ENCODE measurements at regions of chr1 and their contacts with region 1.

Region 1: DNA sequence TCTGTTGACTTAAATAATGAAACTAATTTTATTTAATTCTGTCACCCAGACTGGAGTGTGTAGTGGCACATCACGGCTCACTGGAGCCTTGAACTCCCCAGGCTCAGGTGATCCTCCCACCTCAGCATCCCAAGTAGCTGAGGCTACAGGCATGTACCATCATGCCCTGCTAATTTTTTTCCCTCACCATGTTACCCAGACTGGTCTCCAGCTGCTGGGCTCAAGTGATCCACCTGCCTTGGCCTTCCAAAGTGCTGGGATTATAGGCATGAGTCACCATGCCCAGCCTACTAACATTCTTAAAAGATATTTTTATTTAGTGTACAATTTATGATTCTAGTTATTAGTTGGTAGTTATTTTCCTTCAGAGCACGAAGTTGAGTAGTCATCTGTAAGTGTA is 49.5 kb downstream of the NRDC start:
- DNase-seq: no peak
- ATAC-seq: no peak
- H3K4me3 ChIP-seq: no peak overlapping the region
- H3K27ac ChIP-seq: no peak overlapping the region
- H3K4me1 ChIP-seq: no peaks in the 10 kb centered on the region
- H3K27me3 ChIP-seq: no peaks in the 10 kb centered on the region
- CTCF ChIP-seq: no peak
- POLR2A ChIP-seq: no peak
- RAD21 ChIP-seq: no peak

Region 2: DNA sequence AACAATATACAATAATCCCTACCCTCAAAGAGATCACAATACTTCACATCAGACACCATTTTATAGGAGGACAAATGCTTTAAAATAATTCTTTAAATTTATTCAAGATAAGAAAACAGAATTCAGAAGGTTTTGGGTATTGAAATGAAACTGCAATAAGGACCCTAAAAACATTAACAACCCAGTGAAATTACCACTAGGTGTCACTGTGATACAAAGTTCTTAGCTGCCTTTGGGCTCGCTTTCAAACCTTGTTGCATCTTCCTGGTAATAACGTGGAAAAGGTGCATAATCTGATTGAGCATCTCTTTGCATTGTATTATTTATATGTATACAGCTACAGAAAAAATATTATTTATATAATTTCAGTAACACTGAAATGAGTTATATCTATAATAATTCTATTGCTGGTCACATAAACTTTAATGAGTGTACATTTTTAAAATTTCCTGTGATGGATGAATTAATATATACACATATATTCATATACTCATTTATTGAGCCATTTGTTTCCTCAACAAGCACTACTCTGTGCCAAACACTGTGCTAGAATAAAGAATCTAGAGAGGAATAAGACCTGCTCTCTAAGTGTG is 1054.2 kb before region 1 on chr1:
- CTCF ChIA-PET with region 1: no interaction called
- POLR2A ChIA-PET with region 1: no interaction called
- dilution Hi-C with region 1: no loop called
- in situ Hi-C with region 1: no loop called
- intact Hi-C with region 1: no loop called
- DNase-seq: peak; percentile 74
- ATAC-seq: peak; percentile 60
- H3K4me3 ChIP-seq: no peak overlapping the region
- H3K27ac ChIP-seq: no peak overlapping the region
- H3K4me1 ChIP-seq: no peaks in the 10 kb centered on the region
- H3K27me3 ChIP-seq: no peaks in the 10 kb centered on the region
- CTCF ChIP-seq: peak; percentile 78
- POLR2A ChIP-seq: no peak
- RAD21 ChIP-seq: peak; percentile 83

Region 3: GRCh38 chr1:51871351-51871975 is 42.4 kb after region 1 on chr1:
- CTCF ChIA-PET with region 1: no interaction called
- POLR2A ChIA-PET with region 1: no interaction called
- dilution Hi-C with region 1: no loop called
- in situ Hi-C with region 1: no loop called
- intact Hi-C with region 1: loop called (anchors 5 kb)
- DNase-seq: no peak
- ATAC-seq: no peak
- H3K4me3 ChIP-seq: no peak overlapping the region
- H3K27ac ChIP-seq: no peak overlapping the region
- H3K4me1 ChIP-seq: 0 out of 2 replicates have a peak, but pooled peaks cover 3% of the 10 kb centered on the region
- H3K27me3 ChIP-seq: no peaks in the 10 kb centered on the region
- CTCF ChIP-seq: no peak
- POLR2A ChIP-seq: no peak
- RAD21 ChIP-seq: no peak

Measured in IMR-90 (cell line).